ENCODE measurements at regions of chr2 and their contacts with region 1.

Region 1: GRCh38 chr2:241950413-241951315 is 81.1 kb downstream of the RTP5 start:
- DNase-seq: peak; percentile 94
- H3K4me3 ChIP-seq: peak overlapping the region in 1 of 2 experiments; percentile 30; a peak in 1 of 4 replicates
- H3K27ac ChIP-seq: no peak overlapping the region
- H3K4me1 ChIP-seq: peaks cover 0 to 4% of the 10 kb centered on the region in 2 experiments; a peak in 1 of 4 replicates
- H3K27me3 ChIP-seq: no peaks in the 10 kb centered on the region
- CTCF ChIP-seq: peak; percentile 86
- EP300 ChIP-seq: no peak
- RAD21 ChIP-seq: peak; percentile 90

Region 2: DNA sequence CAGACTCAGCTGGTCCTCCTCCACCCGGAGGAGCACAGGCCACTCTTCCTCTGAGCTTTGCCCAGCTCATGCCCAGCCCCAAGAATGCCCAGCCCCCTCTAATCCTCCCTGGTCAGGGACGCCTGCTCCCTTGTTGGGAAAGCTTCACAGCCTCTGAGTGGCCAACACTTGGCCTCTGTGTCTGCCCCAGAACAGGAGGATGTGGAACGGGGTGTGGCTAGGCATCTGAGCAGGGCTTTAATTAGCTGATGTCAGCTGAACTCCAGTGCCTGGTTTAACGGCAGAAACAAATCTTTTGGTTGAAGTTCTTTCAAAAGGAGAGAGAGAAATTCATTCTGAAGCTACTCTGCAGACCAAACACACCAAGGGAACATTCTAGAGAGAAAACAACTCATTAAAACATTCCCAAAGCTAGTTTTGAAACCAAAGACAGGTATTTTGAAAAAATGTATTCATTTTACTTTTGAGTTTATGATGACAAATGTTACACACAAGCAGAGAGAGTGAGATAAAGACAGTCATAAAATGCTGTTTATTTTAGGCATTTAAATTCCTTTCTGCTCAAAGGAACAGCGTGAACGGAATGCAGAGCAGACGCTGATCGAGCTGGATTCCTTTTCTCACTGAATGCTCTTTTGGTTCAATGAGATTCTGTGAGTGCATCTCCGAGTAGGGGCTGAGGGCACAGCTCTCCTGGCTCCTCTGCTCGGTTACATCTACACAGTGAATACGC is 17.3 kb before region 1 on chr2:
- CTCF ChIA-PET with region 1: interaction called, 20 read pairs
- POLR2A ChIA-PET with region 1: no interaction called
- DNase-seq: no peak
- H3K4me3 ChIP-seq: no peak overlapping the region
- H3K27ac ChIP-seq: peak overlapping the region in 1 of 2 experiments; percentile 28; a peak in 1 of 4 replicates
- H3K4me1 ChIP-seq: peaks cover 5 to 11% of the 10 kb centered on the region in 2 experiments; a peak in 2 of 4 replicates
- H3K27me3 ChIP-seq: no peaks in the 10 kb centered on the region
- CTCF ChIP-seq: no peak
- EP300 ChIP-seq: no peak
- RAD21 ChIP-seq: no peak

Region 3: GRCh38 chr2:241940329-241940728 is 10.3 kb before region 1 on chr2:
- CTCF ChIA-PET with region 1: interaction called, 20 read pairs
- POLR2A ChIA-PET with region 1: no interaction called
- DNase-seq: no peak
- H3K4me3 ChIP-seq: no peak overlapping the region
- H3K27ac ChIP-seq: no peak overlapping the region
- H3K4me1 ChIP-seq: peaks cover 4 to 11% of the 10 kb centered on the region in 2 experiments; a peak in 1 of 4 replicates
- H3K27me3 ChIP-seq: no peaks in the 10 kb centered on the region
- CTCF ChIP-seq: peak; percentile 39; the same call in 1 of the 2 replicates
- EP300 ChIP-seq: no peak
- RAD21 ChIP-seq: no peak